Gastrocnemius medialis (tissue), 4 donors: ENCODE measurements at regions of chr10 and their contacts with region 1.

Region 1: GRCh38 chr10:11525503-11525902 is 85.9 kb downstream of the USP6NL start:
- DNase-seq: peak; percentile 23 to 45
- ATAC-seq: no peak
- H3K4me3 ChIP-seq: no peak overlapping the region
- H3K27ac ChIP-seq: no peak overlapping the region
- H3K4me1 ChIP-seq: no peaks in the 10 kb centered on the region
- H3K27me3 ChIP-seq: no peaks in the 10 kb centered on the region
- CTCF ChIP-seq: no peak
- POLR2A ChIP-seq: no peak

Region 2: GRCh38 chr10:11472158-11472753 is 53.2 kb before region 1 on chr10:
- in situ Hi-C with region 1: no loop called
- intact Hi-C with region 1: no loop called
- DNase-seq: peak; percentile 16 to 33
- ATAC-seq: peak in 1 of 2 donors; percentile 77
- H3K4me3 ChIP-seq: no peak overlapping the region
- H3K27ac ChIP-seq: no peak overlapping the region
- H3K4me1 ChIP-seq: no peaks in the 10 kb centered on the region
- H3K27me3 ChIP-seq: no peaks in the 10 kb centered on the region
- CTCF ChIP-seq: peak; percentile 64 to 81 (median 75)
- POLR2A ChIP-seq: no peak

Region 3: GRCh38 chr10:11602919-11603523 is 77.5 kb after region 1 on chr10:
- in situ Hi-C with region 1: loop called in 1 of 4 experiments (anchors 10 kb)
- intact Hi-C with region 1: no loop called
- DNase-seq: no peak
- ATAC-seq: no peak
- H3K4me3 ChIP-seq: no peak overlapping the region
- H3K27ac ChIP-seq: no peak overlapping the region
- H3K4me1 ChIP-seq: no peaks in the 10 kb centered on the region
- H3K27me3 ChIP-seq: no peaks in the 10 kb centered on the region
- CTCF ChIP-seq: no peak
- POLR2A ChIP-seq: no peak

Region 4: GRCh38 chr10:11986593-11987216 is 461.2 kb after region 1 on chr10:
- in situ Hi-C with region 1: loop called in 2 of 4 experiments (anchors 10 to 25 kb)
- intact Hi-C with region 1: no loop called
- DNase-seq: peak; percentile 10 to 41
- ATAC-seq: peak in 1 of 2 donors; percentile 53
- H3K4me3 ChIP-seq: no peak overlapping the region
- H3K27ac ChIP-seq: no peak overlapping the region
- H3K4me1 ChIP-seq: peaks cover 0 to 3% of the 10 kb centered on the region in 2 donors
- H3K27me3 ChIP-seq: no peaks in the 10 kb centered on the region
- CTCF ChIP-seq: peak; percentile 50 to 82 (median 53)
- POLR2A ChIP-seq: no peak